ENCODE measurements at regions of chr21 and their contacts with region 1.

Region 1: GRCh38 chr21:26715878-26716506 is 129.2 kb downstream of the ADAMTS1 start:
- DNase-seq: peak; percentile 19 to 45 (median 33)
- ATAC-seq: peak; percentile 64; the same call in 1 of the 3 replicates
- H3K4me3 ChIP-seq: no peak overlapping the region
- H3K27ac ChIP-seq: no peak overlapping the region
- H3K4me1 ChIP-seq: no peaks in the 10 kb centered on the region
- H3K27me3 ChIP-seq: no peaks in the 10 kb centered on the region
- CTCF ChIP-seq: peak; percentile 39 to 51 (median 50); a peak in 5 of 6 replicates
- EP300 ChIP-seq: no peak
- POLR2A ChIP-seq: no peak
- RAD21 ChIP-seq: 0 out of 4 replicates have a peak, but pooled peaks of 1 of the 2 experiments have one; percentile 25

Region 2: DNA sequence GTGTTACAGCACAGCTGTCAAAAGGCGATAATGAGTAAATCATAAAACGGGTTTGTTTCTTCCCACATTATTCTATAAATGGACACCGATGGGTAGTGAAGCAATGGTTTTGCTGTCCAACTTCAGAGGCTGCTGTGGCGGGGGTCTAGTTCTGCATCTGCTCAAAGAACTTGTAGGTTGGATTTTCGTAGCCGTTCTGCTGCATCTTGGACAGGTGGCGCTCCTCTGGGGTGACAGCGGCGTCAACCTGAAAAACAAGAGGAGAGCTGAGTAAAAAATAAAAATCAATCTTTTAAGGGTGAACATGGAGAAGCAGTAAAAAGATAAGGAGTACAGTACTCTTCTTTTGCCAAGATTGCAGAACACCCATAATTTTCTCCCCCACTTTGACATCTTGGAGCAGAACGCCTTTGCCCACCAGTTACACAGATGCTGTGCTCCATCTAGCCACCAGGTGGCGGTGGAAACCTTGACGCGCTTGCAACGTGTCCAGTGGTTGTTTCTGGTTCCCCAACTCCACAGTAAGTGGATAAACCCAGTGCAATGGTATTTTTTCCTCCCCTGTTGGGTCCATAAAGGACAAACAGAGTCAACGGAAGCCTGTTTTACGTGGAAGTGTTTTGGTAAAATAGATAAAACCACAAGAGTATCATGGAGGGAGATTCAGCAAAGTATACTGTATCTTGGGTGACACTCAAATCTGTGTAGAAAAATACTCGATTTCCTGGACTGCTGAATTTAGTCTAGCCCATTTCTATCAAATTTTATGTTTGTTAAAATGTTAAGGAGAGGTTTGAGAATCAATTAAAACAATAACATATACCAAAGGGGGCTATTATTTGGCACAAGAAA is 834.2 kb before region 1 on chr21:
- CTCF ChIA-PET with region 1: interaction called, 5 read pairs
- POLR2A ChIA-PET with region 1: no interaction called
- in situ Hi-C with region 1: loop called (anchors 25 kb)
- intact Hi-C with region 1: loop called (anchors 5 kb)
- DNase-seq: peak; percentile 63 to 75 (median 75)
- ATAC-seq: peak; percentile 97
- H3K4me3 ChIP-seq: no peak overlapping the region
- H3K27ac ChIP-seq: no peak overlapping the region
- H3K4me1 ChIP-seq: no peaks in the 10 kb centered on the region
- H3K27me3 ChIP-seq: no peaks in the 10 kb centered on the region
- CTCF ChIP-seq: peak; percentile 87 to 93 (median 91)
- EP300 ChIP-seq: no peak
- POLR2A ChIP-seq: no peak
- RAD21 ChIP-seq: peak; percentile 84 to 87

Region 3: DNA sequence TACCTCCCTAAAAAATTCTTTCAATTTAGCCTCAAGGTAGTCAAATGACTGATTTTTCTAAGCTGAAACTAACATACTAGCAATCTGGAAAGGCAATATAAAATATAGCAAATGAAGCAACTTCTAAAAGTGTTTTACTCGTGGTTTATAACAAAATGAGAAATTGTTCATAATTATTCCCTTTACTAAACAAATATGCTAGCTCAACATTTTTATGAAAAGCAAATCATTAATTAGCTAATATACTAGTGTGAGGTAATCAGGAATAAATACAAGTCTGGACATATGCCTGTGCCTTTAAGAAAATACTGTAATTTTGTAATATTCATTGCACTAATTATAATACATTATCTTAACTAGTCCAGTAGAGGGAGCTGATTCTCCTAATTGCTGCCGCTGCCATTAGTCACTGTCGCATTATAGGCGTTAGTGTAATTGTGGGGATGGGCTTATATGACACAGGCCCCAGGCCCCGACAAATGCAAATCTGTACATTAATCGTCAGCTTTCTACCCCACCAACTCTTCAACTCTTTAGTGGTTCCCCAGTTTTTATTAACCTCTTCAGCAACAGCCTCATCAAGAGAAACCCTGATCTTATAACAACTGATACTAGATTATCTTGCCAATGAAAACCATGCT is 820.3 kb before region 1 on chr21:
- CTCF ChIA-PET with region 1: no interaction called
- POLR2A ChIA-PET with region 1: no interaction called
- in situ Hi-C with region 1: loop called (anchors 25 kb)
- intact Hi-C with region 1: loop called (anchors 5 kb)
- DNase-seq: peak; percentile 15 to 37 (median 28)
- ATAC-seq: peak; percentile 80
- H3K4me3 ChIP-seq: no peak overlapping the region
- H3K27ac ChIP-seq: no peak overlapping the region
- H3K4me1 ChIP-seq: no peaks in the 10 kb centered on the region
- H3K27me3 ChIP-seq: no peaks in the 10 kb centered on the region
- CTCF ChIP-seq: peak; percentile 42 to 49 (median 44); a peak in 4 of 6 replicates
- EP300 ChIP-seq: no peak
- POLR2A ChIP-seq: no peak
- RAD21 ChIP-seq: peak in 1 of 2 experiments; percentile 47; a peak in 3 of 4 replicates

Region 4: DNA sequence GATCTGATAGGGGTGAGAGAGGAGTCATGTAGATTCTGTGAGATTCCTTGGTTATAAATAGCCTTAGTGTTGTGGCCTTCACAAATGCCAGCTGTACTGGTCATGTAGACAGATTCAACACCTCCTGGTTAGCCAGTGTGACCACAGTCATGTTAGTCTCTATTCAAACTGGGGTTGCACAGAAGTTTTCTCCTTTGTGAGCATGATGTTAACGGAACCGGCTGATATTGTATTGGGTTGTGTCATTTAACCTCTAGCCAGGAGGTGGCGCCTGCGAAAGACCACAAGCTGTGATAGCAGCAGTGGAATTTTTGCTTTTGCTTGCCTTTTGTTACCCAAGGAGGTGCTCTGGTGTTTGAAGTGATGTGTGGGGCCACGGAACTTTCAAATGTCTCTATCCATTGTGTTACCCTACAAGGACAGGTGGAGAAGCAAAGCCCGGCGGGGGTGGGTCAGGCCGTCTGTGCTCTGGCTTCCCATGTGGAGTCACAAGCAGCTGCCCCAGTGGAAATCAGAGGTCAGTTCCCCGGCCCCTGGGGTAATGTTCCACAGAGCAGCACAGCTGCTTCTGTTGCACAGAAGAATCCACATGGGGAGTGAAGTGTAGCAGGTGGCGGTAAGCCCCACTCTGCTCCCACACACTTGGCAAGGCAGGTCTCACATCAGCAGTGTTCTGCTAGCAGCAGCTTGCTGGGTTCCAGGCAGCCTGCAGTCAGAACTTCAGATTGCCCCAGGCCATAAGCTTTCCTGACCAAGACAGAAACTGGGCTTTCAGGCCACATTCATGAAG is 16.6 kb after region 1 on chr21:
- CTCF ChIA-PET with region 1: no interaction called
- POLR2A ChIA-PET with region 1: no interaction called
- in situ Hi-C with region 1: no loop called
- intact Hi-C with region 1: no loop called
- DNase-seq: peak in 1 of 4 experiments; percentile 12
- ATAC-seq: no peak
- H3K4me3 ChIP-seq: no peak overlapping the region
- H3K27ac ChIP-seq: no peak overlapping the region
- H3K4me1 ChIP-seq: no peaks in the 10 kb centered on the region
- H3K27me3 ChIP-seq: no peaks in the 10 kb centered on the region
- CTCF ChIP-seq: peak in 2 of 3 experiments; percentile 37 to 38; a peak in 3 of 6 replicates
- EP300 ChIP-seq: no peak
- POLR2A ChIP-seq: no peak
- RAD21 ChIP-seq: 0 out of 4 replicates have a peak, but pooled peaks of 1 of the 2 experiments have one; percentile 21